Activated T-helper 2 cell treated with anti-CD3 and anti-CD28 coated beads, Interferon-gamma antibody, Interleukin-2, Interleukin-4, amounts not matched to agents 10 μg/mL and 5 μg/mL and 100 μg/mL, durations not matched to agents 14 hours and 24 hours and 36 hours (primary cell): ENCODE measurements at regions of chr1 and their contacts with region 1.

Region 1: DNA sequence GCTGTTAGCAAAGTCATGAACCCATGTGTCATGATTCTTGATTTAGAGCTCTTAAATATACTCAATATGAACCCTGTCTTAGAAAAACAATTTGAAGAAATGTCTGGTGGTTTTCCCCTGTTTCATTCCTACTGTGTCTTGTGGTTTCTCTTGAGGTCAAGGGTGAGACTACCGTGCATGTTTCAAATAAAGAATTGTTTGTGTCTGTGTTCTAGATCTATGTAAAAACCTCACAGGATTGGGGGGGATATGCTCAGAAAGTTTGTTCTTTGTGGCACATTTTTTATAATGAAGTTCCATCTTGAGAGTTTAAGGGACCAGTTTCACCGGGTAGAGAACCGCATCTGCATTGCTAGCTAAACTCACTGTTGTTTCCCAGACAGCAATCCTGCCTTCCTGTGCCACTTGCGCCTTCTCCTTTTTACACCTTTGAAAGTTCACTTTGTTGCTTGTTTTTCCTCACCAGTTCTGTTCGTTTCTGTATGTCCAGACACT is 30.9 kb upstream of the CACYBP start:
- DNase-seq: no peak
- H3K4me3 Mint-ChIP-seq: peak overlapping the region; percentile 50
- H3K27ac Mint-ChIP-seq: peak overlapping the region; percentile 83
- H3K4me1 Mint-ChIP-seq: peaks cover 61% of the 10 kb centered on the region
- H3K27me3 Mint-ChIP-seq: no peaks in the 10 kb centered on the region

Region 2: DNA sequence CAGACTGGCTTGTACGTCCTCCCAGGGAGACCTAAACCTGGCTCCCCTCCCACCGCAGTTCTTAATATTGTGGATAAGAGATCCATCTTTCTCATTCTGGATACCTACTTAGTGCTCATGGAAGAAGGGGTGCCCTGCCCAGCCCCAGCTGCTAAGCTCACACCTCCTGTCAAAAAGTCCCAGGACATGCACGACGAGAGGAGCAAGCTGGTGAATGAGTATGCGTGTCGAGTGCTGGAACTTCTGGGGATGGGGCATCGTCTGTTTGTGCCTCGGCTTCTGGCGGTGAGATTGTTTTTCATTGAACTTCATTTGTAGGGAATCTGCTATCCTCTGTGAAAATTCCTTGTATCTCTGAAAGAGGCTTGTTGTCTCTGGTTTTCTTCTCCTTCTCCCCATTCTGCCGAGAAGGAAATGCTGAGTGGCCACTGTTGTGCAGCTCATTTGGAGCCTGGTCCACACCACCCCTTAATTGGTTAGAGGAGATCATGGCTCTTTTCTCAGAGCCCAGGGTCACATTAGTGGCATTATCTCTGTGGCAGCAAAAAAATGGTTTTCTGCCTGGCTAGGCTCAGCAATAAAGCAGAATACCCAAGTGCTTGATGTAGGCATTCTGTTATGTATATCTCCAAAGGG is 168.5 kb before region 1 on chr1:
- intact Hi-C with region 1: loop called (anchors 2 kb)
- DNase-seq: peak; percentile 14
- H3K4me3 Mint-ChIP-seq: no peak overlapping the region
- H3K27ac Mint-ChIP-seq: no peak overlapping the region
- H3K4me1 Mint-ChIP-seq: peaks cover 2% of the 10 kb centered on the region
- H3K27me3 Mint-ChIP-seq: no peaks in the 10 kb centered on the region

Region 3: GRCh38 chr1:174809755-174810280 is 159.0 kb before region 1 on chr1:
- intact Hi-C with region 1: loop called (anchors 2 kb)
- DNase-seq: no peak
- H3K4me3 Mint-ChIP-seq: no peak overlapping the region
- H3K27ac Mint-ChIP-seq: peak overlapping the region; percentile 48
- H3K4me1 Mint-ChIP-seq: peaks cover 7% of the 10 kb centered on the region
- H3K27me3 Mint-ChIP-seq: no peaks in the 10 kb centered on the region

Region 4: GRCh38 chr1:174841747-174842146 is 127.0 kb before region 1 on chr1:
- intact Hi-C with region 1: no loop called
- DNase-seq: no peak
- H3K4me3 Mint-ChIP-seq: no peak overlapping the region
- H3K27ac Mint-ChIP-seq: no peak overlapping the region
- H3K4me1 Mint-ChIP-seq: peaks cover 7% of the 10 kb centered on the region
- H3K27me3 Mint-ChIP-seq: no peaks in the 10 kb centered on the region

Region 5: DNA sequence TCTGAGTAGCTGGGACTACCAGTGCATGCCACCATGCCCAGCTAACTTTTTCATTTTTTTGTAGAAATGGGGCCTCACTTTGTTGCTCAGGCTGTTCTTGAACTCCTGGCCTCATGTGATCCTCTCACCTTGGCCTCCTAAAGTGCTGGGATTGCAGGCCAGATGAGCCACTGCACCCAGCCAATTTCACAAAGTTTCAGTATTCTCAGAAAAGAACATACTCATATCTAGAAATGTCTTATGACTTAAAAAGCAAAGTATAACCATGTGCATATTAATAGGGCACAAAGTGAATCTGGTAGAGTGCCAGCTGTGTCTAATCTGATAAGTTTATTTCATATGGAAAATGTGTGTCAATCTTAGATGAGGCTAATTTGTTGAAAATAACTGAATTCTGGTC is 56.5 kb before region 1 on chr1:
- intact Hi-C with region 1: loop called (anchors 1 kb)
- DNase-seq: no peak
- H3K4me3 Mint-ChIP-seq: no peak overlapping the region
- H3K27ac Mint-ChIP-seq: peak overlapping the region; percentile 28
- H3K4me1 Mint-ChIP-seq: peaks cover 46% of the 10 kb centered on the region
- H3K27me3 Mint-ChIP-seq: no peaks in the 10 kb centered on the region

Region 6: GRCh38 chr1:174957829-174958228 is 11.0 kb before region 1 on chr1:
- intact Hi-C with region 1: loop called (anchors 1 kb)
- DNase-seq: no peak
- H3K4me3 Mint-ChIP-seq: peak overlapping the region; percentile 49
- H3K27ac Mint-ChIP-seq: peak overlapping the region; percentile 48
- H3K4me1 Mint-ChIP-seq: peaks cover 16% of the 10 kb centered on the region
- H3K27me3 Mint-ChIP-seq: no peaks in the 10 kb centered on the region

Region 7: DNA sequence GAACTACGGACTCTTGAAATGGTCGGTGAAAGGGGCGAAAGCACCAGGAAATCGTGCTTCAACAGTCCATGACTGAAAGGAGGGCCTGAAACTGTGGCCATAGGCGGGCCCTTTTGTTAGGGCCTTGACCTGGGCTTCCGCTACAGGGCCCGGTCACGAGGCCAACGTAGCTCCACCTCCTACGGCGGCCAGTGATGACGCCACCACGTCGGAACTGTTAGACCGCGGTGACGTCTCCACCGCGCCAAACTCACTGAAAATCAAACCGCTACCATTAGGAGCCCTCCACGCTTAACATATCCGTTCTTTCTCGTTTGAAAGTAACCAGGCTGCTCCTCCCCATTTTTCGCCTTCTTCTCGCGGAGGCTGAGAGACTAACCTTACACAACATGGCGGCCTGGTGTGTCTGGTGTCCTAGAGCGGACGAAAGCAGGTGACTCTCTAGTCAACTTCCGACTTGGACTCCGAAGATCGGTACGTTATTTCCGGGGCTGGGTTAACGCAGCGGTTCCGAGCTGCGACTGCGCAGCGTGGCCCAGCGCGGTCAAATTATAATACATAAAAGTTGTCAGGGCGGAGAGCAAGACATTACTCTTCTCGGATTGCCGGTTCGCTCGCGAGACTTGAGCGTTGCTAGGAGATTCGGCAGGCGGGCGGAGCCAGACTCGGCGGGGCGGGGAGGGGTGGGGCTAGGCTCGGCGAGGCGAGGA is 30.6 kb after region 1 on chr1:
- intact Hi-C with region 1: loop called (anchors 1 kb)
- DNase-seq: peak; percentile 96
- H3K4me3 Mint-ChIP-seq: no peak overlapping the region
- H3K27ac Mint-ChIP-seq: no peak overlapping the region
- H3K4me1 Mint-ChIP-seq: peaks cover 38% of the 10 kb centered on the region
- H3K27me3 Mint-ChIP-seq: no peaks in the 10 kb centered on the region

Region 8: GRCh38 chr1:175763797-175764196 is 795.0 kb after region 1 on chr1:
- intact Hi-C with region 1: no loop called
- DNase-seq: no peak
- H3K4me3 Mint-ChIP-seq: no peak overlapping the region
- H3K27ac Mint-ChIP-seq: no peak overlapping the region
- H3K4me1 Mint-ChIP-seq: no peaks in the 10 kb centered on the region
- H3K27me3 Mint-ChIP-seq: no peaks in the 10 kb centered on the region